Activated CD4-positive, alpha-beta T cell treated with anti-CD3 and anti-CD28 coated beads for 36 hours (primary cell): ENCODE measurements at regions of chr12 and their contacts with region 1.

Region 1: DNA sequence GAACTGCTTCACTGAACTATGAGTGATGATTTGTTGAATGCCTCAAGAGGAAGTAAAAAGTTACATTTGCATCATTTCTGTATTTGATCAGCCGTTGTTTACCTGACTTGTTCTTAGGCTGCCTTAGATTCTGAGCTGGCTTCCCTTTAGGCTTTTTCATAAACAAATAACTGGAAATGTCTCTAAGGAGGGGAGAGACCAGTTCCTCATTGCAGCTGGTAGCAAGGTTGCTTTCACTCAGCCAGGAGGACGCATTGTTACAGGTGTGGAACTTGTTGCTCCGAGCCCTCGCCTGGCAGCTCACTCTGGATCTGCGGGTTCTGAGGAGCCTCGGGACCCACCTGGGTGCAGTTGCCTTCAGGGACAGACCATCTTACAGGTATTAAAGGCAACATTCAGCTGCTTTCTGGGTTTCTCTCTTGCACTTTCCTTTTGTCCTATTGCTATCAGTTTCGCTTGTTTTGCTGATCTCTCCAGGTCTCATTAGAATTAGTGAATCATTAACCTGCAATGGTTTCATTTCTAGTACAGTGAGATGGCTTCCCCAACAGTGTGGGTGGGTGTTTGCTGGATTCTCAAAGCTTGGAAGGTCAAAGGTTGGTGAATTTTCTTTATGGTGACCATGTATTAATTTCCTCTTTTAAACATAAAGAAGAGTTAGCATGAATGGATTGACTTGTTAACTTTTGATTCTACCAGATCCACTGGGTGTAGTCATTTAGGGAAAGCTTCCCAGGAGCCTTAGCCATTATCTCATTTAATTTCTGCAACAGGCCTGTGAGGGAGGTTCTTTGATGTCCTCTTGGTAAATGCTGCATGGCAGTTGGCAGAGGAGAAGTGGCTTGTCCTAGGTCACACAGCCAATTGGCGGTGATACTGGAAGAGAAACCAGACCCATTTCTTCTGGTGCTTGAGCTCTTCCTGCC is at the start of gene PLEKHG7:
- DNase-seq: peak; percentile 20
- ATAC-seq: peak; percentile 70
- H3K4me3 Mint-ChIP-seq: no peak within 1 kb of the TSS
- H3K27ac Mint-ChIP-seq: no peak within 1 kb of the TSS
- H3K4me1 Mint-ChIP-seq: peaks cover 12% of the 10 kb centered on the region
- H3K27me3 Mint-ChIP-seq: no peaks in the 10 kb centered on the region
- total RNA-seq, gene PLEKHG7: not detected

Region 2: GRCh38 chr12:92078167-92079053 is 624.6 kb before region 1 on chr12:
- CTCF ChIA-PET with region 1: no interaction called
- POLR2A ChIA-PET with region 1: no interaction called
- intact Hi-C with region 1: no loop called
- DNase-seq: peak; percentile 38
- ATAC-seq: peak; percentile 87
- H3K4me3 Mint-ChIP-seq: no peak overlapping the region
- H3K27ac Mint-ChIP-seq: peak overlapping the region; percentile 87
- H3K4me1 Mint-ChIP-seq: peaks cover 79% of the 10 kb centered on the region
- H3K27me3 Mint-ChIP-seq: no peaks in the 10 kb centered on the region

Region 3: GRCh38 chr12:92629349-92630065 is 73.5 kb before region 1 on chr12:
- CTCF ChIA-PET with region 1: no interaction called
- POLR2A ChIA-PET with region 1: no interaction called
- intact Hi-C with region 1: no loop called
- DNase-seq: no peak
- ATAC-seq: no peak
- H3K4me3 Mint-ChIP-seq: no peak overlapping the region
- H3K27ac Mint-ChIP-seq: no peak overlapping the region
- H3K4me1 Mint-ChIP-seq: no peaks in the 10 kb centered on the region
- H3K27me3 Mint-ChIP-seq: no peaks in the 10 kb centered on the region

Region 4: GRCh38 chr12:92722897-92723296 is 19.9 kb after region 1 on chr12:
- CTCF ChIA-PET with region 1: no interaction called
- POLR2A ChIA-PET with region 1: no interaction called
- intact Hi-C with region 1: loop called in 1 of 2 experiments (anchors 2 kb)
- DNase-seq: no peak
- ATAC-seq: no peak
- H3K4me3 Mint-ChIP-seq: no peak overlapping the region
- H3K27ac Mint-ChIP-seq: no peak overlapping the region
- H3K4me1 Mint-ChIP-seq: no peaks in the 10 kb centered on the region
- H3K27me3 Mint-ChIP-seq: peaks cover 6% of the 10 kb centered on the region